Activated naive CD4-positive, alpha-beta T cell treated with anti-CD3 and anti-CD28 coated beads for 36 hours (primary cell): ENCODE measurements at regions of chr14 and their contacts with region 1.

Region 1: GRCh38 chr14:94355191-94355797 is 32.2 kb upstream of the SERPINA6 start:
- DNase-seq: peak; percentile 54
- H3K4me3 Mint-ChIP-seq: no peak overlapping the region
- H3K27ac Mint-ChIP-seq: no peak overlapping the region
- H3K4me1 Mint-ChIP-seq: peaks cover 7% of the 10 kb centered on the region
- H3K27me3 Mint-ChIP-seq: peaks cover 38% of the 10 kb centered on the region

Region 2: DNA sequence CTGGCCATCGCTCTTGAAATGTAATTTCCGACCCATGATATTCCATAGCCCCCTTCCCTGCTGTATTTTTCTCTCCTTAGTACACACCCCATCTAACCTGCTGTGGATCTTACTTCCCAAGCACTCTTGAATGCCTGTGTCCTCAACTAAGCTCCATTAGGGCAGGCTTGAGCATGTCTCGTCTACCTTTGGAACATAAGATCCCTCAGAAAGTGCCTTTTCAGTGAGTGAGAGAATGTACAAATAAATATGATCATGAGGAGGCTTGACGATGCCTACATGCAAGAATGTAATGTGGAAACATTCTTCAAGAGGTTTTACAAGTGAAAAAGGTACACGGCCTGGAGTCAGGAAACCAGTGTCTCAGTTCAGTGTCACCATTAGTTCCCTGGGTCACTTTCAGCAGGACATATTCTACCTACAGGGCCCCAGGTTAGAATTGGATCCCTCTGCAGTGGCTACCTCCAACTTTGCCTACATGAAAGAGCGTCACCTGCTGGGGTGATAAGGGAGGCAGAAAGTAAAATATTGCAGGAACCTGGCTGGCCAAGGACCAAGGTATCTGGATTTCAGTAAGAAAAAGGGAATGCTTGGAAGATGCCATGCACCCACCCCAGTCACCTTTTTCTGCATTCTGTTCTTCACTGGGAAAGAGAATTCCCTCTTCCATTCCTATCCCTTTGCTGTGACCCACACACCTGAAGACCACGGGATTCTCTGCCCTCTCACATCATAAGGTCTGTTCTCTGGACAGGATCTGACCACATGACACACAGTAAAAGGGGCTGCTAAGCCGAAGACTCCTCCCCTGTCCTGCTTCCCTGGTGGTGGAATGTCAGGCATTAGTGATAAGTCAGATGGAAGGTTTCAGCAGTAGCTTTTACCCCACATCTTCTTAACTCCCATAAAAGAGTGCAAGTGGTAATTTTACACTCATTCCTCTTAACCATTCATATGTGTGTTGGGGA is 57.7 kb after region 1 on chr14:
- CTCF ChIA-PET with region 1: no interaction called
- intact Hi-C with region 1: loop called (anchors 1 kb)
- DNase-seq: no peak
- H3K4me3 Mint-ChIP-seq: no peak overlapping the region
- H3K27ac Mint-ChIP-seq: no peak overlapping the region
- H3K4me1 Mint-ChIP-seq: no peaks in the 10 kb centered on the region
- H3K27me3 Mint-ChIP-seq: peaks cover 25% of the 10 kb centered on the region